Dorsolateral prefrontal cortex (tissue), 120 donors: ENCODE measurements at regions of chr16 and their contacts with region 1.

Region 1: GRCh38 chr16:84726079-84726668 is 26.4 kb downstream of the USP10 start:
- DNase-seq: peak; percentile 83 to 96 (median 91)
- H3K4me3 ChIP-seq: peak overlapping the region in 16 of 59 donors; percentile 1 to 29 (median 11)
- H3K27ac ChIP-seq: peak overlapping the region in 38 of 59 donors; percentile 1 to 81 (median 49)
- H3K27me3 ChIP-seq: no peaks in the 10 kb centered on the region
- CTCF ChIP-seq: peak; percentile 92 to 99 (median 96)

Region 2: GRCh38 chr16:84511180-84511824 is 214.9 kb before region 1 on chr16:
- intact Hi-C with region 1: loop called in 1 of 2 experiments (anchors 5 kb)
- DNase-seq: peak; percentile 72 to 89 (median 83)
- H3K4me3 ChIP-seq: peak overlapping the region in 58 of 59 donors; percentile 8 to 72 (median 46)
- H3K27ac ChIP-seq: peak overlapping the region in 9 of 59 donors; percentile 9 to 79 (median 62)
- H3K27me3 ChIP-seq: no peaks in the 10 kb centered on the region
- CTCF ChIP-seq: peak; percentile 85 to 100 (median 98)

Region 3: GRCh38 chr16:84629580-84629979 is 96.6 kb before region 1 on chr16:
- intact Hi-C with region 1: loop called (anchors 5 to 10 kb)
- DNase-seq: no peak
- H3K4me3 ChIP-seq: no peak overlapping the region
- H3K27ac ChIP-seq: no peak overlapping the region
- H3K27me3 ChIP-seq: no peaks in the 10 kb centered on the region
- CTCF ChIP-seq: no peak

Region 4: GRCh38 chr16:84690088-84690819 is 35.9 kb before region 1 on chr16:
- intact Hi-C with region 1: loop called in 1 of 2 experiments (anchors 2 kb)
- DNase-seq: no peak
- H3K4me3 ChIP-seq: no peak overlapping the region
- H3K27ac ChIP-seq: no peak overlapping the region
- H3K27me3 ChIP-seq: no peaks in the 10 kb centered on the region
- CTCF ChIP-seq: no peak

Region 5: GRCh38 chr16:84970447-84971127 is 244.4 kb after region 1 on chr16:
- intact Hi-C with region 1: no loop called
- DNase-seq: peak; percentile 69 to 86 (median 80)
- H3K4me3 ChIP-seq: no peak overlapping the region
- H3K27ac ChIP-seq: peak overlapping the region in 2 of 59 donors; percentile 35 to 64
- H3K27me3 ChIP-seq: no peaks in the 10 kb centered on the region
- CTCF ChIP-seq: peak; percentile 87 to 99 (median 96)